Activated CD4-positive, alpha-beta memory T cell treated with anti-CD3 and anti-CD28 coated beads for 36 hours (primary cell): ENCODE measurements at regions of chr3 and their contacts with region 1.

Region 1: DNA sequence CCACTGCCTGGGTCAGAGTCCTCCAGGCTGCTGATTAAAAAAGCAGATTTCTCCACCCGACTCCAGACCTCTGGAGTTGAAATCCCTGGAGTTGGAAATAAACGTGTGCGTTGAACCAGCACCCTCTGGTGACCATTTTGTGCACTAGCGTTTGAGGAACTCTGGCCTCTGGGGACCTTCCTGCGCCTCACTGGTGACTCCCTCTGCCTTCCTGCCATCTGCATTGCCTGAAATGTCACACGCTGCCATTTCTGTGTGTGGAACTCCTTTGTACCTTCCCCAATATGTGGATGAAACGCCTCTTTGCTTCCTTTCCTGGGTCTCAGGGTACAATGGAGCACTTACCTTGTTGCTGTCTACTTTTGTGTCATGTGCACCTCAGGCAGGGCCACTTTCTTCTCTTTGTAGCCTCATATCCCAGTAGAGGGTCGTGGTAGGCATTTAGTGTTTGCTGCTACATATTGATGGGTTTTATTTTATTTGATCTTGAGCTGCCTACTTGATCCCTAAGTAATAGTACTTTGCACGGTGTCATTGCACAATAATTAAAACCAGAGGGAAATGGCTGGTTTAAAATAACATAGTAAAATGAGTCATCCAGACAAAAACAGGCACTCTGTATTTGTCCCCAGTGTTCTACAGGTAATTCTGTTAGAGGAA is 56.8 kb downstream of the GPR171 start:
- DNase-seq: peak; percentile 70
- H3K4me3 Mint-ChIP-seq: no peak overlapping the region
- H3K27ac Mint-ChIP-seq: no peak overlapping the region
- H3K4me1 Mint-ChIP-seq: no peaks in the 10 kb centered on the region
- H3K27me3 Mint-ChIP-seq: no peaks in the 10 kb centered on the region

Region 2: GRCh38 chr3:150528354-150528797 is 617.8 kb before region 1 on chr3:
- CTCF ChIA-PET with region 1: no interaction called
- POLR2A ChIA-PET with region 1: no interaction called
- intact Hi-C with region 1: loop called (anchors 10 kb)
- DNase-seq: no peak
- H3K4me3 Mint-ChIP-seq: no peak overlapping the region
- H3K27ac Mint-ChIP-seq: no peak overlapping the region
- H3K4me1 Mint-ChIP-seq: peaks cover 6% of the 10 kb centered on the region
- H3K27me3 Mint-ChIP-seq: no peaks in the 10 kb centered on the region

Region 3: GRCh38 chr3:150925751-150926201 is 220.4 kb before region 1 on chr3:
- CTCF ChIA-PET with region 1: interaction called, 44 read pairs
- POLR2A ChIA-PET with region 1: no interaction called
- intact Hi-C with region 1: loop called (anchors 1 kb)
- DNase-seq: peak; percentile 68
- H3K4me3 Mint-ChIP-seq: no peak overlapping the region
- H3K27ac Mint-ChIP-seq: no peak overlapping the region
- H3K4me1 Mint-ChIP-seq: peaks cover 2% of the 10 kb centered on the region
- H3K27me3 Mint-ChIP-seq: peaks cover 11% of the 10 kb centered on the region

Region 4: GRCh38 chr3:151067158-151067557 is 79.0 kb before region 1 on chr3:
- CTCF ChIA-PET with region 1: interaction called, 19 read pairs
- POLR2A ChIA-PET with region 1: no interaction called
- intact Hi-C with region 1: loop called (anchors 1 kb)
- DNase-seq: peak; percentile 13
- H3K4me3 Mint-ChIP-seq: no peak overlapping the region
- H3K27ac Mint-ChIP-seq: no peak overlapping the region
- H3K4me1 Mint-ChIP-seq: no peaks in the 10 kb centered on the region
- H3K27me3 Mint-ChIP-seq: peaks cover 5% of the 10 kb centered on the region

Region 5: DNA sequence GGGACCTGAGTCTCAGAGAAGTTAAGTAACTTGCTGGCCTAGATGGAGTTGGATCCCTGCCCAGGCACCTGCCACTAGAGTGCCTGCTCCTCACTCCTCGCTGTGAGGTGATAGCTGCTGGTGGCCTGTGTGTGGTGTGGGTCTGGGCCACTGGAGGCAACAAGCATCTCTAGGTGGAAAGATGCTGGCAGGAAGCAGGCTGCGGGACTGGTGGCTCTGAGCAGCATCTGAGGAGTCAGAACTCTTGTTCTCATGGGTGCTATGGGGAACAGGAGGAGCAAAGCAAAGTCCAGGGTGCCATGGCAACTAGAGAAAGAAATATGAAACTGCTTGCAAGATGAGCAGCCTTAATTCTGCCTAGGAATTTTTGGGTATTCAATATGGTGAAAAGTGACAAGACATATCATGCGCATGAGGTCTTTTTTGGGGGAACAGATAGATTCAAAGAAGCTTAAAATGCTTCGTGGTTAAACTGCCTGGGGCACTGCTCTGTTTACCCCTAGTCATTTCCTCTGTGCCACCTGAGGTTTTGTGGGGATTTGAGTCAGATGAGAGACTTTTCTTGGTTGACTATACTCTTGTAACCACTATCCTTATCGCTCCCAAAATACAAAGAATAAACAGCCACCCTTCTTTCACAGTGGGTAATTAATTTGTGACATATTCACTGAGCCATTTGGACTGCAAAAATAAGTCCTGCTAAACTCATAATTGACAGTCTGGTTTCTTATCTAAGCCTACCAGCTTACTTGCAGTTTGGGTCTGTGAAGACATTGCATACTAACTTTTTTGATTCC is 10.5 kb before region 1 on chr3:
- CTCF ChIA-PET with region 1: interaction called, 13 read pairs
- POLR2A ChIA-PET with region 1: no interaction called
- intact Hi-C with region 1: loop called (anchors 2 kb)
- DNase-seq: peak; percentile 76
- H3K4me3 Mint-ChIP-seq: peak overlapping the region; percentile 4
- H3K27ac Mint-ChIP-seq: peak overlapping the region; percentile 75
- H3K4me1 Mint-ChIP-seq: peaks cover 23% of the 10 kb centered on the region
- H3K27me3 Mint-ChIP-seq: no peaks in the 10 kb centered on the region